Head of caudate nucleus (tissue), 42 donors: ENCODE measurements at regions of chr15 and their contacts with region 1.

Region 1: DNA sequence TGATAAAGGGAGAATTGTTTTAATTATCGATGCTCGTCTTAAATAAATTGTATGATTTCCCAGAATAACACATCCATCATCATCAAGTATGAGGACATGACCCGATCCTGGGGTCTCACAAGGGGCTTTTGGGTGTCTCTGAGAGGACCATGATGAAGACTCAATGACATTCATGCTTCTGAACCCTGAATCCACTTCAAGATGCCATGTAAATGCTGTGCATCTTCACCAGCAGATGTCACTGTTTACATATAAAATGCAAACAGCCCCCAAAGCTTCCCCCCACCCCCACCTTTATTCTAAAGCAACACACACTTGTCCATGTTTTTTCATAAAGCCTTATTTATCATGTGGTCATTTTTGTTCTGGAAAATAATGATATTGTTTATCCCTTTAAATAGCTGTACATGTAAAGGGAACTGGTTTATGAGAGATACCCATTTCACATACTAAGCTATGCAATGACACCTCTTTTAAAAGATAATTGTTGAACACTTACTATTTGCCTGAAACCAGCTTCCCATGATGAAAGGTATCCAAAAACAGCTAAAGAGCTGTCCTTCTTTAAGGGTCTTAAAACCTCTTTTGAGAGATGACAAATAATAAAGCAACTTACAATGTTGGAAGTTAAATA is 69.7 kb upstream of the UBE3A start:
- DNase-seq: peak in 14 of 42 donors; percentile 20 to 71 (median 33)

Region 2: GRCh38 chr15:25391971-25392721 is 116.3 kb before region 1 on chr15:
- intact Hi-C with region 1: no loop called
- DNase-seq: no peak

Region 3: GRCh38 chr15:25693321-25694237 is 185.1 kb after region 1 on chr15:
- intact Hi-C with region 1: loop called (anchors 10 kb)
- DNase-seq: peak in 20 of 42 donors; percentile 28 to 64 (median 54)